MCF 10A (cell line): ENCODE measurements at regions of chr3 and their contacts with region 1.

Region 1: DNA sequence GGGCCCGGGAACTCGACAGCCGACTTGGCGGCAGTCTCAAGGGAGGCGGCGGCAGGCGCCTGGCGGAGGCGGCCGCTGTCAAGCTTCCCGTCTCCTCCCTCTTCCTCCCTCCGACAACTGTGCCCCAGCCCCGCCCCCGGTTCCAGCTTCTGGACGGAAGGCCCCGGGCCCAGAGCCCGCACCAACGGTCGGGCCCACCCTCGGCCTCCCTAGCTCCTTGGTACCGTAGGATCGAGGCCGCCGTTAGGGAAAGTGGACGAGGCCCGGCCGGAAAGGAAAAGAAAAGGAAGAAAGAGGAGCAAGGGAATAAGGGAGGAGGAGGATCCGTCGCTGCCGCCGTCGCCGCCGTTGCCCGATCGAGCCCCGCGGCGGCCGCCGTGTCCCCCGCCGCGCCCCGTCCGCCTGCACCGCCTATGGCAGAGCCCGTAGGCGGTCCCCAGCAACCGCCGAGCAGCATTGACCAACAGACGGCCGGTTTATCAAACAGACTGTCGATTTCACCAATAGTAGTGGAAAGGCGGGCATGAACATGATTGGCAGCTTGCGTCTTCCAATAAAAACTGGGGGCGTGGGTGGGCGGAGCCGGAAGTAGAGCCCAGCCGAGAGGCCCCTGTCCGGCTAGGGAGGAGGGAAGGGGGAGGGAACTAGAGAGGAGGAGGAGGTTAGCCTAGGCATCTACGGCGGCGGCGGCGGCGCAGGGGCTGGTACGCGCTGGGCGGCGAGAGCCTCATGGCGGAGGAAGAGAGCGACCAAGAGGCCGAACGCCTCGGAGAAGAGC is at the starts of genes CGGBP1 and ZNF654:
- DNase-seq: peak; percentile 99
- H3K4me3 Mint-ChIP-seq: peak within 1 kb of the TSS; percentile 97
- H3K27ac Mint-ChIP-seq: peak within 1 kb of the TSS; percentile 94
- H3K4me1 Mint-ChIP-seq: peaks cover 11% of the 10 kb centered on the region
- H3K27me3 Mint-ChIP-seq: no peaks in the 10 kb centered on the region
- CTCF ChIP-seq: no peak
- total RNA-seq, gene CGGBP1: 83.4 and 96.6 TPM in 2 replicates
- total RNA-seq, gene ZNF654: 10.4 and 12.4 TPM in 2 replicates

Region 2: DNA sequence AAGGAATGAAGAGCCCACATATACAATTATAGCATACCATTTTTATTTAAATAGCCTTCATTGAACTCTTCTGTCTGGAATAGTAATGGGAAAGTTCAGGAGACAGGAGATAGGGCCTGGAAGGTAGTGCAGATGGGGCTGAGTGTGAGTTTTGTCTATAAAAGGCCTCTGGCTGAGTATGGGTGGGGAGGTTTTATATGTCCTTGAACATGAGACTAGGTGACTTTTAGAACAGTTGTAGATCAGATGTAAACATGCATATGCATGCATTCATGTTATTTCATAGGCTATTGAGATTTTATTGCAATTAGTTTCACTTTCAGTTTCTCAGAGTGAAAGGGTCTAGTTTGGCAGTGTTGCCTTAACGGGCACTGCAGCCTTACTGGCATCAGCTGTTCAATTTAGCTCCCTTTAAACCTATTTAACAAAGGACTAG is 27.1 kb before region 1 on chr3:
- CTCF ChIA-PET with region 1: no interaction called
- POLR2A ChIA-PET with region 1: interaction called, 37 read pairs
- intact Hi-C with region 1: no loop called
- DNase-seq: peak; percentile 41
- H3K4me3 Mint-ChIP-seq: peak overlapping the region; percentile 67
- H3K27ac Mint-ChIP-seq: peak overlapping the region; percentile 59
- H3K4me1 Mint-ChIP-seq: peaks cover 21% of the 10 kb centered on the region
- H3K27me3 Mint-ChIP-seq: no peaks in the 10 kb centered on the region
- CTCF ChIP-seq: no peak

Region 3: GRCh38 chr3:88078930-88079329 is 20.1 kb after region 1 on chr3:
- CTCF ChIA-PET with region 1: no interaction called
- POLR2A ChIA-PET with region 1: interaction called, 21 read pairs
- intact Hi-C with region 1: no loop called
- DNase-seq: no peak
- H3K4me3 Mint-ChIP-seq: no peak overlapping the region
- H3K27ac Mint-ChIP-seq: no peak overlapping the region
- H3K4me1 Mint-ChIP-seq: peaks cover 30% of the 10 kb centered on the region
- H3K27me3 Mint-ChIP-seq: no peaks in the 10 kb centered on the region
- CTCF ChIP-seq: no peak

Region 4: GRCh38 chr3:88141458-88142083 is 82.8 kb after region 1 on chr3:
- CTCF ChIA-PET with region 1: no interaction called
- POLR2A ChIA-PET with region 1: interaction called, 10 read pairs
- intact Hi-C with region 1: no loop called
- DNase-seq: peak; percentile 31
- H3K4me3 Mint-ChIP-seq: no peak overlapping the region
- H3K27ac Mint-ChIP-seq: peak overlapping the region; percentile 39
- H3K4me1 Mint-ChIP-seq: peaks cover 12% of the 10 kb centered on the region
- H3K27me3 Mint-ChIP-seq: no peaks in the 10 kb centered on the region
- CTCF ChIP-seq: no peak

Region 5: GRCh38 chr3:88149509-88150362 is 91.0 kb after region 1 on chr3 and contains the start of gene C3orf38:
- CTCF ChIA-PET with region 1: no interaction called
- POLR2A ChIA-PET with region 1: interaction called, 63 read pairs
- intact Hi-C with region 1: loop called (anchors 2 kb)
- DNase-seq: peak; percentile 93
- H3K4me3 Mint-ChIP-seq: peak within 1 kb of the TSS; percentile 98
- H3K27ac Mint-ChIP-seq: peak within 1 kb of the TSS; percentile 95
- H3K4me1 Mint-ChIP-seq: peaks cover 18% of the 10 kb centered on the region
- H3K27me3 Mint-ChIP-seq: no peaks in the 10 kb centered on the region
- CTCF ChIP-seq: no peak
- total RNA-seq, gene C3orf38: 21.7 and 23.4 TPM in 2 replicates